ENCODE measurements at regions of chr10 and their contacts with region 1.

Region 1: GRCh38 chr10:122980209-122981065 is at the start of gene PSTK:
- DNase-seq: peak; percentile 87
- H3K4me3 Mint-ChIP-seq: peak within 1 kb of the TSS; percentile 87
- H3K27ac Mint-ChIP-seq: peak within 1 kb of the TSS; percentile 96
- H3K4me1 Mint-ChIP-seq: peaks cover 14% of the 10 kb centered on the region
- H3K27me3 Mint-ChIP-seq: peaks cover 6% of the 10 kb centered on the region
- total RNA-seq, gene PSTK: 3.4 TPM in 2 replicates

Region 2: GRCh38 chr10:122879339-122880273 is 100.8 kb before region 1 on chr10 and contains the start of gene FAM24B:
- intact Hi-C with region 1: loop called (anchors 1 kb)
- DNase-seq: peak; percentile 93
- H3K4me3 Mint-ChIP-seq: peak within 1 kb of the TSS; percentile 90
- H3K27ac Mint-ChIP-seq: peak within 1 kb of the TSS; percentile 90
- H3K4me1 Mint-ChIP-seq: peaks cover 47% of the 10 kb centered on the region
- H3K27me3 Mint-ChIP-seq: no peaks in the 10 kb centered on the region
- total RNA-seq, gene FAM24B: 15.6 and 16.0 TPM in 2 replicates

Region 3: GRCh38 chr10:122953827-122954730 is 26.4 kb before region 1 on chr10 and contains the start of gene C10orf88:
- intact Hi-C with region 1: loop called (anchors 1 kb)
- DNase-seq: peak; percentile 97
- H3K4me3 Mint-ChIP-seq: peak within 1 kb of the TSS; percentile 88
- H3K27ac Mint-ChIP-seq: peak within 1 kb of the TSS; percentile 73
- H3K4me1 Mint-ChIP-seq: peaks cover 22% of the 10 kb centered on the region
- H3K27me3 Mint-ChIP-seq: peaks cover 17% of the 10 kb centered on the region
- total RNA-seq, gene C10orf88: 9.1 and 10.0 TPM in 2 replicates

Region 4: GRCh38 chr10:123008439-123009205 is 28.2 kb after region 1 on chr10 and contains the starts of genes ACADSB and IKZF5:
- intact Hi-C with region 1: loop called (anchors 1 kb)
- DNase-seq: peak; percentile 94
- H3K4me3 Mint-ChIP-seq: peak within 1 kb of the TSS; percentile 98
- H3K27ac Mint-ChIP-seq: peak within 1 kb of the TSS; percentile 99
- H3K4me1 Mint-ChIP-seq: peaks cover 35% of the 10 kb centered on the region
- H3K27me3 Mint-ChIP-seq: no peaks in the 10 kb centered on the region
- total RNA-seq, gene ACADSB: 21.4 and 23.3 TPM in 2 replicates
- total RNA-seq, gene IKZF5: 15.0 and 16.1 TPM in 2 replicates

Region 5: DNA sequence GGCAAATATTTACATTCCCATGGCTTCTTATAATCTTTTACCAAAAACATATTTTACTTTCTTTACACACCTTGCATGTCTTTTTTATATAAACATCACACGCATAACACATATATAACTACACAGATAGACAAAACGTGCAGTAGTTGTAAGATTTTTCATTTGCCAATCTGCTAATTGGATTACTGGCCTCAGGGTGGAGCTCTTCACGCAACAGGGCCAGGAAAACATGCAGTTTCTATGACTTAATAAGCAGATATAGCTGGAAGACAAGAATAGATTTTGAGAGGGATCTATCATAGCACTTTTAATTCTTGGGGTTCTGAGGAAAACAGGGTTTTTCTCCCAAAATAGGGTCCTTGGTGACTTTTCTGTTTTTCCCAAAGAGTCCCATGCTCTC is 41.1 kb after region 1 on chr10:
- intact Hi-C with region 1: no loop called
- DNase-seq: no peak
- H3K4me3 Mint-ChIP-seq: no peak overlapping the region
- H3K27ac Mint-ChIP-seq: no peak overlapping the region
- H3K4me1 Mint-ChIP-seq: peaks cover 4% of the 10 kb centered on the region
- H3K27me3 Mint-ChIP-seq: no peaks in the 10 kb centered on the region